Transverse colon (tissue), 4 donors: ENCODE measurements at regions of chr7 and their contacts with region 1.

Region 1: DNA sequence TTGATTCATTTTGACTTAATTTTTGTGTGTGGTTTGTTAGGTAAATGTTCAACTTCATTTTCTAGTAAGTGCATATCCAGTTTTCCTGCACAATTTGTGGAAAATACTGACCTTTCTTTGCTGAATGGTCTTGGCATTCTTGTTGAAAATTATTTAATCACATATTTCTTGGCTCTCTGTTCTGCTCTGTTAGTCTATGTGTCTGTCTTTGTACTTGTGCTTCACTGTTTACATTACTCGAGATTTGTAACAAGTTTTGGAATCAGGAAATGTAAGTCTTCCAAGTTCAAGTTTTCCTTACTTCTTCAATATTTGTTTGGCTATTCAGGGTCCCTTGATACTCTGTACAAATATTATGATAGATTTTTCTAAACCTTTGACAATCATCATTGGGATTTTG is 838.2 kb upstream of the POM121L12 start:
- DNase-seq: no peak
- H3K4me3 ChIP-seq: no peak overlapping the region
- H3K27ac ChIP-seq: no peak overlapping the region
- H3K4me1 ChIP-seq: no peaks in the 10 kb centered on the region
- H3K27me3 ChIP-seq: no peaks in the 10 kb centered on the region
- CTCF ChIP-seq: no peak
- EP300 ChIP-seq: no peak
- POLR2A ChIP-seq: no peak

Region 2: GRCh38 chr7:52088008-52088901 is 109.0 kb before region 1 on chr7:
- in situ Hi-C with region 1: loop called in 1 of 4 experiments (anchors 25 kb)
- intact Hi-C with region 1: no loop called
- DNase-seq: no peak
- H3K4me3 ChIP-seq: peak overlapping the region in 1 of 4 donors; percentile 14
- H3K27ac ChIP-seq: no peak overlapping the region
- H3K4me1 ChIP-seq: no peaks in the 10 kb centered on the region
- H3K27me3 ChIP-seq: no peaks in the 10 kb centered on the region
- CTCF ChIP-seq: no peak
- EP300 ChIP-seq: no peak
- POLR2A ChIP-seq: no peak